Activated B cell treated with CpG ODN at 0.5 μM for 24 hours (primary cell): ENCODE measurements at regions of chr10 and their contacts with region 1.

Region 1: GRCh38 chr10:58384999-58385783 is at the start of gene TFAM:
- DNase-seq: peak; percentile 97
- ATAC-seq: peak; percentile 84
- H3K4me3 Mint-ChIP-seq: peak within 1 kb of the TSS; percentile 98
- H3K27ac Mint-ChIP-seq: peak within 1 kb of the TSS; percentile 97
- H3K4me1 Mint-ChIP-seq: peaks cover 41% of the 10 kb centered on the region
- H3K27me3 Mint-ChIP-seq: no peaks in the 10 kb centered on the region
- CTCF ChIP-seq: no peak
- total RNA-seq, gene TFAM: 59.5 and 60.2 TPM in 2 replicates

Region 2: GRCh38 chr10:58030208-58030607 is 355.0 kb before region 1 on chr10:
- CTCF ChIA-PET with region 1: no interaction called
- POLR2A ChIA-PET with region 1: no interaction called
- intact Hi-C with region 1: no loop called
- DNase-seq: no peak
- ATAC-seq: no peak
- H3K4me3 Mint-ChIP-seq: no peak overlapping the region
- H3K27ac Mint-ChIP-seq: no peak overlapping the region
- H3K4me1 Mint-ChIP-seq: no peaks in the 10 kb centered on the region
- H3K27me3 Mint-ChIP-seq: no peaks in the 10 kb centered on the region
- CTCF ChIP-seq: no peak

Region 3: GRCh38 chr10:58268870-58269605 is 116.2 kb before region 1 on chr10 and contains the start of gene CISD1:
- CTCF ChIA-PET with region 1: no interaction called
- POLR2A ChIA-PET with region 1: interaction called, 43 read pairs
- intact Hi-C with region 1: loop called (anchors 1 kb)
- DNase-seq: peak; percentile 95
- ATAC-seq: peak; percentile 68
- H3K4me3 Mint-ChIP-seq: peak within 1 kb of the TSS; percentile 97
- H3K27ac Mint-ChIP-seq: peak within 1 kb of the TSS; percentile 93
- H3K4me1 Mint-ChIP-seq: peaks cover 47% of the 10 kb centered on the region
- H3K27me3 Mint-ChIP-seq: no peaks in the 10 kb centered on the region
- CTCF ChIP-seq: no peak
- total RNA-seq, gene CISD1: 16.7 and 23.8 TPM in 2 replicates

Region 4: DNA sequence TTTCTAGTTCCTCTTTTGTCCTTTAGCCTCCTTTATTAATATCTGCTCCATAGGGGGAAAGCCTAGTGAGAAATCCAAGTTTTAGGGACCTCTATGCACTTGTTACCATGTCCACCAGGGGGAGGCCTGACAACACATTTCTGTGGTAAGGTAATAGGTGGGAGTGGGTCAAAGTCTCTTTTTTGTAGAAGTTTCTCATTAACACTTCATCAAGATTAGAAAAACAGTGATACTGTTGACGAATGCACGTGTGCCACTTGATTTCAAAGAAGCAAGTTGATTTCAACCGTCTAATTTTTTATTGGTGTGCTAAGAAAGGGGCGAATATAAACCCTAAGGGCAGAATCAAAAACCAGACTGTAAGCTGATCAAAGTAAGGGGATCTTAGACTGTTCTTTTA is 85.6 kb before region 1 on chr10:
- CTCF ChIA-PET with region 1: interaction called, 52 read pairs
- POLR2A ChIA-PET with region 1: interaction called, 6 read pairs
- intact Hi-C with region 1: loop called (anchors 1 kb)
- DNase-seq: peak; percentile 33
- ATAC-seq: peak; percentile 84
- H3K4me3 Mint-ChIP-seq: no peak overlapping the region
- H3K27ac Mint-ChIP-seq: no peak overlapping the region
- H3K4me1 Mint-ChIP-seq: no peaks in the 10 kb centered on the region
- H3K27me3 Mint-ChIP-seq: peaks cover 9% of the 10 kb centered on the region
- CTCF ChIP-seq: peak; percentile 63

Region 5: DNA sequence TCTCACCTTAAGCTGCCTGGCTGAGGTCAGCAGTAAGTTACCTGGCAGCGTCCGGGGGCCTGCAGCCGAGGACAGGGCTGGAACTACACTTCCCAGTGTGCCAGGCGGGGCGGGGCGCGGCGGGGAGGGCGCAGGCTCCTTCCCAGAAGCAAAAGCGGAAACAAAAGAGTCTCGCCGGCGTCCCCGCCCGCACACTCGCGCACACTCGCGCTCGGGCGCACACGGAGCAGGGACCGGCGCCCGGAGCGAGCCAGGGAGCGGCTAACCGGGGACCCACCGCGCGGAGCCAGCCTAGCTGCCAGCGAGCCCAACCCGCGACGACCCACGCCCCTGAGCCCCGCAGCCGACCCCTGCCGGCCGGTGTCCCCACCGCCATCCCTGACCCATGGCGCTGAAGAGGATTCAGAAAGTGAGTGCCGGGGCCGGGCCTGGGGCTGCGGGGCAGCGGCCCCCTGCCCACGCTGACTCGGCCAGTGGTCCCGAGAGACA is 50.3 kb before region 1 on chr10 and contains the start of gene UBE2D1:
- CTCF ChIA-PET with region 1: interaction called, 5 read pairs
- POLR2A ChIA-PET with region 1: interaction called, 39 read pairs
- intact Hi-C with region 1: loop called (anchors 1 kb)
- DNase-seq: peak; percentile 81
- ATAC-seq: peak; percentile 97
- H3K4me3 Mint-ChIP-seq: peak within 1 kb of the TSS; percentile 95
- H3K27ac Mint-ChIP-seq: peak within 1 kb of the TSS; percentile 69
- H3K4me1 Mint-ChIP-seq: peaks cover 32% of the 10 kb centered on the region
- H3K27me3 Mint-ChIP-seq: no peaks in the 10 kb centered on the region
- CTCF ChIP-seq: no peak
- total RNA-seq, gene UBE2D1: 13.3 and 15.0 TPM in 2 replicates

Region 6: GRCh38 chr10:58518775-58519174 is 133.6 kb after region 1 on chr10:
- CTCF ChIA-PET with region 1: no interaction called
- POLR2A ChIA-PET with region 1: no interaction called
- intact Hi-C with region 1: no loop called
- DNase-seq: no peak
- ATAC-seq: no peak
- H3K4me3 Mint-ChIP-seq: no peak overlapping the region
- H3K27ac Mint-ChIP-seq: no peak overlapping the region
- H3K4me1 Mint-ChIP-seq: peaks cover 3% of the 10 kb centered on the region
- H3K27me3 Mint-ChIP-seq: peaks cover 24% of the 10 kb centered on the region
- CTCF ChIP-seq: no peak